ENCODE measurements at regions of chr16 and their contacts with region 1.

Region 1: DNA sequence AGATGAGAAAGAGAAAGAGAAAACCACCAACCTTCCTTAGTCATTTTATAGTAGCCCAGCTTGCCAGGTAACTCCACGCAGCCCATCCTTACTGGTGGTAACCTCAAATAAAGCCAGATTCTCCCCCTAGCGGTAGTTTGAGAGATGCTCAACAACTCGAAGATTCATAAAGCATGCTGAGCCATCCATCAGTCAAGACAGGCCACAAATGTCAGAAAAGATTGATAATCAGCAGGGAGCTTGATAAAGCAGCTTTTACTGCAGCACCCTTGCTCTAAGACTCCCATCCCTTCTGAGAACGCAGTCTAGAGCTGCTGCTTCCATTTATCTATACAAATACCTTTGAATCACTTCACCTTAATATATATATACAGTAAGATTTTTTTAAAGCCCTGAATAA is 451.5 kb upstream of the HSBP1 start:
- DNase-seq: peak; percentile 24
- ATAC-seq: peak; percentile 72

Region 2: GRCh38 chr16:83113317-83113716 is 242.9 kb before region 1 on chr16:
- intact Hi-C with region 1: loop called in 1 of 2 experiments (anchors 5 kb)
- DNase-seq: no peak
- ATAC-seq: peak; percentile 57 to 65

Region 3: DNA sequence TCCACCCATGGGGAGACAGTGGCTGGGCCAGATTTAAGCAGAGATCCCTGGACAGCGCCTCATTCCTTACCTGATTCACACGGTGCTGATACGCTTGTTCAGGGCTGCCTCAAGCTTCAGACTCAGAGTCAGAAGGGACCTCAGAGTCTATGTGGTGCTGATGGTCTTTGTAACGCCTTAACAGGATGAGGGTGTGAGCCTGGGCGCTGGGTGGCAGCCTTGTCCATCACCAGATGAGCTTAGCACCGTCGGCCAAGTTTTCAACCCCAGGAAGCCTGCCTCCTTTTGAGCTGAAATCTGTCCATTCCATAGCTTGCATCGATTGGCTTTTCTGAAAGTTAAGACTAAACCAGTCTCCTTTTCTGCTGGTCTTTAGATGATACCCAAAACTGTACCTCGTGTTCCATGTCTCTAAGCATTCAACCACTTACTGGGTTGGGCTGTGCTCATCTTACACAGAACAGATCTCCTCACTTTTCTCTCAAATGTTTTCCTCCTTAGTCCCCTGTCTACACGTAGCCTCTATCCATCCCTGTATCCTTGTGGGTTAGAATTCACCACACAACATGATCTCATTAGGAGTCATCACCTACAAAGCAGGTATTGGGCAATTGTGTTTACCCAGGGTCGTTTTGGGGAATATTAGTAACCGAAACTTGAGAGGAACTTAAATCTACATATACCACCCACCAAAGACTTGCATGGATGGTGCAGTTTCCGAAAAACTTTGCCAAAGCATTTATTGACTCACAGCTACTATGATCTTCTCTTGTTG is 156.1 kb before region 1 on chr16:
- intact Hi-C with region 1: loop called in 1 of 2 experiments (anchors 2 kb)
- DNase-seq: peak; percentile 35
- ATAC-seq: peak; percentile 71 to 81

Region 4: GRCh38 chr16:83227336-83227735 is 128.9 kb before region 1 on chr16:
- intact Hi-C with region 1: loop called in 1 of 2 experiments (anchors 10 kb)
- DNase-seq: no peak
- ATAC-seq: no peak

Measured in left cardiac atrium (tissue), 4 donors.